Activated naive CD4-positive, alpha-beta T cell treated with anti-CD3 and anti-CD28 coated beads for 36 hours (primary cell): ENCODE measurements at regions of chr4 and their contacts with region 1.

Region 1: DNA sequence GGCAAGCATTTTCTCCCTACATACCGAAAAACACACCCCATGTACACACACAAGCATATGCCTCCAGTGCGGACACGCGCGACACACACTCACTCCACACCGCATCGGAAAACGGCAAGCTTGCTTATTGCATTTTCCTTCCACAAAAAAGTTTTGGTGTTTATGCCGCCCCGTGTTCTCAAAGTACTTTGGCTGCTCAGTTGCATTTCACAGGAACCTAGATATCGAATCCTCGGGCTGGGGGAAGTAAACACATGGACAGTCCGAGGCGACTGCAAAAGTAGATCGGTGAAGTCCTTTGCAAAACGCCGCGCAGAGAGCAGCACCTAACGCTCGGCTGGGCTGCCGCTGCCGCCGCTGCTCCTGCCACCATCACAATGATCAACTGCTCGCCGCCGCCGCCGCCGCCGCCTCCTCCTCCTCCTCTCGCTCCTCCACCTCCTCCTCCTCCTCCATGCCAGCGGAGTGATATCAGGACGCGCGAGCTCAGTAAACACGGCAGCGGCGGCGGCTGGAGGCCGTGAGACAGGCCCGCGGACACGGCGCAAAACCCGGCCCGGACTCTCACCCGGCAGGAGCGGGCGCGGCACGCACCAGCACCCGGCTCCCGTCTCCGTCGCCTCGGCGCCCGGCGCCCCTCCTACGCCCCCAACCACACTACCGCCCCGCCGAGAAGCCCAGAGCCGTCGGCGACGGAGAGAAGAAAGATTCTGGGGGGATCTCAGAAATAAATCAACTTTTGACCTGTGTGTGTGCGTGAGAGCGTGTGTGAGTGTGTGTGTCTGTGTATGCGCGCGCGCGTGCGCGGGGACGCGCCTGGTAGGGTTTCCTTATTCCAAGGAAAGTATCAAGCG is at the start of gene MAML3:
- DNase-seq: peak; percentile 85
- H3K4me3 Mint-ChIP-seq: peak within 1 kb of the TSS; percentile 82
- H3K27ac Mint-ChIP-seq: peak within 1 kb of the TSS; percentile 5
- H3K4me1 Mint-ChIP-seq: peaks cover 35% of the 10 kb centered on the region
- H3K27me3 Mint-ChIP-seq: peaks cover 13% of the 10 kb centered on the region
- total RNA-seq, gene MAML3: 0.52 to 0.76 TPM

Region 2: DNA sequence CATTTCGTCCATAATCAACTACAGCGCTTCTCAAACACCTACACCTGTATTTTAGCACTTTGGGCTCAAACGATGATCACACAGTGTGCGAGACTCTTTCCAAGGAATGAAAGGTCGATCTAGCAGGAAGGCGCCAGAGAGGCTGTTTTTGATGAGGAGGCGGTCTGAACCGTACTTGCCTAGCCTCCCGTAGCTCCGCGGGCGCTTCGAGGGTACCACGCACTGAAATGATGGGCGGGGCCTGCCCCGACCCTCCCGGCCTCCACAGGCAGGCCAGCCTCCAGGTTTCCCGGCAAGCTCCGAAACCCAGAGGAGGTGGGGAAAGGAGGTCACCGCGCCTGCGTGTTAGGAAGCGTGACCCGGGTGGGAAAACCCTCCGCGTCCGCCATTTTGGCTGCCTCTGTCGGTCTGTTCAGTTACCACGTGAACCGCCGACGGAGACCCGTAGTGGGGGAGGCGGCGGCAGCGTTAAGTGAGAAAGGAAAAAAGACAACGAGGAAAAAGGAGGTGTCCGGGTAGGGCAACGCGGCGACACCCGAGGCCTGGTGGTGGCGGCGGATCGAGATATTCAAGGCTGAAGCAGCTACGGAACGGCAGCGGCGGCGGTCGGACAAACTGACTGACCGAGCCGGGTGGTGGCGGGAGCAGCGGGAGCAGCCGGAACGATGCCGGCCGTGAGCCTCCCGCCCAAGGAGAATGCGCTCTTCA is 852.7 kb before region 1 on chr4 and contains the start of gene NAA15:
- CTCF ChIA-PET with region 1: no interaction called
- intact Hi-C with region 1: loop called (anchors 5 kb)
- DNase-seq: peak; percentile 98
- H3K4me3 Mint-ChIP-seq: peak within 1 kb of the TSS; percentile 100
- H3K27ac Mint-ChIP-seq: peak within 1 kb of the TSS; percentile 98
- H3K4me1 Mint-ChIP-seq: peaks cover 56% of the 10 kb centered on the region
- H3K27me3 Mint-ChIP-seq: no peaks in the 10 kb centered on the region
- total RNA-seq, gene NAA15: 91.5 to 94.0 TPM

Region 3: GRCh38 chr4:139858436-139859225 is 295.3 kb before region 1 on chr4:
- CTCF ChIA-PET with region 1: no interaction called
- intact Hi-C with region 1: loop called (anchors 1 kb)
- DNase-seq: peak; percentile 55
- H3K4me3 Mint-ChIP-seq: no peak overlapping the region
- H3K27ac Mint-ChIP-seq: peak overlapping the region; percentile 22
- H3K4me1 Mint-ChIP-seq: peaks cover 19% of the 10 kb centered on the region
- H3K27me3 Mint-ChIP-seq: peaks cover 19% of the 10 kb centered on the region

Region 4: DNA sequence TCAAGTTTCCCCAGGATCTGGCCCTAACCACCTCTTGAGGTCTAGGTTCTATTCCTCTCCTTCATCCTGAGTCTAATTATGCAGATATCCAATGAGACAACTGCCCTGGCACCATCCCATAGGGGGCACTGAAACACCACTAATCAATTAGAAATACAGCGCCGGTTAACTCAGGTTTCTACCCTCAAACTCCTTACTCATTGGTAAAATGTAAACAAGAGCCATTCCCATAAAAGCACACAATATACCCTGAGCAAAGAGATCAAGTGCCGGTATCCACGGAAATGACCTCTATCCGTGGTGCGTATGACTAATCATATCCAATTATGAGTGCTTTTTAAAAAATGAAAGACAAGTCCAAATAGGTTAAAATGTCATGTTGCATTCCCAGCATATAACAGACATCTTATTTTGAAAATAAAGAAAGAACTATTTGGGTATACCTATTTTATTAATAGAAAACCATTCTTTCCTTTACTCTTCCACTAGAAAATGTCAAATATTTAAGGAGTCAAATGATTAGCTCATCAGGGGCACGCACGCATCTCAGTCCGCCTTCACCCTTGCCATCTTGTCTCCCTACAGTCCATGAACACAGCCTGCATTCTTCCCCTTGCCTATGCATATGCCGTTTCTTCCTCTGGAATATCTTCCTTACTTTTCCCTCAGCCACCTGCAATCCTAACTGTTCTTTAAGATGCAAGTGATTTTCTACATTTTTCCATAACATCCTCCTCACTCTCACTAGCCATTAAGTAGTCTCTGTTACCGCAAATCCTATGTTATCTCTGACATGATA is 141.1 kb before region 1 on chr4:
- CTCF ChIA-PET with region 1: no interaction called
- intact Hi-C with region 1: loop called (anchors 2 kb)
- DNase-seq: peak; percentile 69
- H3K4me3 Mint-ChIP-seq: no peak overlapping the region
- H3K27ac Mint-ChIP-seq: no peak overlapping the region
- H3K4me1 Mint-ChIP-seq: peaks cover 8% of the 10 kb centered on the region
- H3K27me3 Mint-ChIP-seq: peaks cover 1% of the 10 kb centered on the region

Region 5: GRCh38 chr4:140095694-140096482 is 58.1 kb before region 1 on chr4:
- CTCF ChIA-PET with region 1: interaction called, 9 read pairs
- intact Hi-C with region 1: loop called (anchors 1 kb)
- DNase-seq: peak; percentile 91
- H3K4me3 Mint-ChIP-seq: peak overlapping the region; percentile 90
- H3K27ac Mint-ChIP-seq: peak overlapping the region; percentile 99
- H3K4me1 Mint-ChIP-seq: peaks cover 77% of the 10 kb centered on the region
- H3K27me3 Mint-ChIP-seq: no peaks in the 10 kb centered on the region

Region 6: GRCh38 chr4:140252742-140253555 is 99.0 kb after region 1 on chr4:
- CTCF ChIA-PET with region 1: interaction called, 8 read pairs
- intact Hi-C with region 1: loop called (anchors 1 kb)
- DNase-seq: peak; percentile 65
- H3K4me3 Mint-ChIP-seq: peak overlapping the region; percentile 5
- H3K27ac Mint-ChIP-seq: no peak overlapping the region
- H3K4me1 Mint-ChIP-seq: peaks cover 11% of the 10 kb centered on the region
- H3K27me3 Mint-ChIP-seq: peaks cover 6% of the 10 kb centered on the region